Activated T-helper 1 cell treated with anti-CD3 and anti-CD28 coated beads, Interleukin-12 subunit alpha, Interleukin-12 subunit beta, Interleukin-2, Interleukin-4 antibody, amounts not matched to agents 30 ng/mL and 10 ng/mL and 1 ng/mL, durations not matched to agents 14 hours and 24 hours and 36 hours (primary cell): ENCODE measurements at regions of chr12 and their contacts with region 1.

Region 1: GRCh38 chr12:65232476-65233077 is 45.9 kb upstream of the MSRB3 start:
- DNase-seq: no peak
- H3K4me3 Mint-ChIP-seq: no peak overlapping the region
- H3K27ac Mint-ChIP-seq: no peak overlapping the region
- H3K4me1 Mint-ChIP-seq: peaks cover 15% of the 10 kb centered on the region
- H3K27me3 Mint-ChIP-seq: no peaks in the 10 kb centered on the region

Region 2: GRCh38 chr12:64968989-64969735 is 263.4 kb before region 1 on chr12:
- intact Hi-C with region 1: no loop called
- DNase-seq: no peak
- H3K4me3 Mint-ChIP-seq: no peak overlapping the region
- H3K27ac Mint-ChIP-seq: no peak overlapping the region
- H3K4me1 Mint-ChIP-seq: no peaks in the 10 kb centered on the region
- H3K27me3 Mint-ChIP-seq: peaks cover 5% of the 10 kb centered on the region

Region 3: GRCh38 chr12:65121049-65121955 is 111.3 kb before region 1 on chr12 and contains the start of gene WIF1:
- intact Hi-C with region 1: loop called (anchors 1 kb)
- DNase-seq: no peak
- H3K4me3 Mint-ChIP-seq: peak within 1 kb of the TSS; percentile 46
- H3K27ac Mint-ChIP-seq: no peak within 1 kb of the TSS
- H3K4me1 Mint-ChIP-seq: no peaks in the 10 kb centered on the region
- H3K27me3 Mint-ChIP-seq: peaks cover 30% of the 10 kb centered on the region
- total RNA-seq, gene WIF1: not detected in 2 replicates

Region 4: DNA sequence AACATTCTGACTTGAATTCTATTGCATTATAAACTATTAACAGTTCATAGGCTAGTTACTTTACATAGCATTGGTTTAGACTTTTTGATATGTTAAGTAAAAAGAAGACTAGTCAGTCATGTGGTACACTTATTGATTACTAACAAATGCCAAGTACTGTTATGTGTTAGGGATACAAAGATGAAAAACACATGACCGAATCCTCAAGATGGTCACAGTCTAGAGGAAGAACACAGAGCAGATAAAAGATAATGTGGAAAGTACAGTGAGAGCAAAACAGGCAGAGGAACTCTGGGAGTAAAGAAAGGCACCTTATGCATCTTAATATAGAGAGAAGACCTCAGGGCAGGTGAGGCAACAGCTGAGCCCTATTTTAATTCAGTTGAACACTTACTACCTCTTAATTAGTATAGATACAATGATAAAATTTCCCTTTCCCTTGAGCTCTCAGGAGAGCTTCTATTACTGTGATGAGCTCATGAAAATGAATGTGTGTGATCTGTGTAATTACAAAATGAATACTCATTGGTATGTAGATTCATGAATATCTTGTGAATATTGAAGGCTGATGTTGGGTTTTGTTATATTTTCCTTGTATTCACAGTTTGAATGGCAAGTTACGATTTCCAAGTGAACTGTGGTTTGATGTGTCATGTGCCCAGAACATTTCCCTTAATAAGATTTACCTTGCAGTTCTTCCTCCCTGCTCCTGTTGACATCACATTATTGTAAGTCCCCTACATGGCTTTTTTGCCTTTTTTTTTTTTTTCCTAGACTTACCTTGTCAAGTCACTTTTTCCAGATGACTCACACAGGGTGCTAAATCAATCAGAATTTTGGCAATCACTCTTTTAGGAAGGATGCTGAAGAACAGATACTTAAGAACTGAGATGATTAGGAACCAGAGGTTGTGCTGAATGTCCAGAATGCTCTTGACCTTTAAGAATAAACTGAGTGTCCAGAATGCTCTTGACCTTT is 16.4 kb after region 1 on chr12:
- intact Hi-C with region 1: loop called (anchors 1 kb)
- DNase-seq: no peak
- H3K4me3 Mint-ChIP-seq: no peak overlapping the region
- H3K27ac Mint-ChIP-seq: peak overlapping the region; percentile 87
- H3K4me1 Mint-ChIP-seq: peaks cover 15% of the 10 kb centered on the region
- H3K27me3 Mint-ChIP-seq: peaks cover under 1% of the 10 kb centered on the region

Region 5: DNA sequence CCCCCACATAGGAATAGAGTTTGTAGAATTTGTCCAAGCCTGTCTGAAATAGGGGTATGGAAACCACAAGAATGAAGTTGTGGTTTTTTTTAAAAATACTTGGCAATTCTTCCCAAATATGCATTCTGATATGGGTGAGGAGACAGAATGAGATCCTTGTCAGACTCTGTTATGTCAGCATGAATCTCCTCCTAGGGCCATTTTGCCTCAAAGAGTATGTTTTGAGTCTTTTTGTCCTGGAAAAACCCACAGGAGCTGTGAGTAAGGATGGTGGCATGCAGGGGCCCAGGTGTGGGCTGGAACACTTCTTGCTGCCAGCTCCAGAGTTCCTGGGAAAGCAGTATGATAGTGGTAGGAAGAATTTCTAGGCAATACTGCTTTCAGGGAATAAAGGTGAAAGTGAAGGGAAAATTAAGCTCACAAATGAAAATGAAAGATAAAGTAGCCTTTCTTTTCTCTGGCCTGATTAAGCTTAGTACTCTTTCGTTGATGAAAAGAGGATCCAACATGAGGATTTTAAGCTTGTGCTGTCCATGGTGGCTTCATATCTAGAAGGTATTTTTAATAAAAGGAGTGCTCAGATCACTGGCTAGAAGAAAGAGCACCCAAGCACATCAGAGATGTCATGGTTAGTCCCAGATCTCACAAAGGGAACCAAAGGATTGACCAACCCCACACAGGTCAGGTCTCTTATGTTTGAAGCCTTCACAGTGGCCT is 767.1 kb after region 1 on chr12:
- intact Hi-C with region 1: no loop called
- DNase-seq: no peak
- H3K4me3 Mint-ChIP-seq: no peak overlapping the region
- H3K27ac Mint-ChIP-seq: no peak overlapping the region
- H3K4me1 Mint-ChIP-seq: no peaks in the 10 kb centered on the region
- H3K27me3 Mint-ChIP-seq: peaks cover 2% of the 10 kb centered on the region